Caco-2 (cell line): ENCODE measurements at regions of chr4 and their contacts with region 1.

Region 1: GRCh38 chr4:30950737-30951136 is 230.6 kb downstream of the PCDH7 start:
- DNase-seq: peak; percentile 25 to 71
- H3K4me3 ChIP-seq: no peak overlapping the region
- H3K4me3 Mint-ChIP-seq: no peak overlapping the region
- H3K27ac Mint-ChIP-seq: peak overlapping the region; percentile 33
- H3K4me1 ChIP-seq: peaks cover 58% of the 10 kb centered on the region
- H3K4me1 Mint-ChIP-seq: peaks cover 39% of the 10 kb centered on the region
- H3K27me3 ChIP-seq: no peaks in the 10 kb centered on the region
- H3K27me3 Mint-ChIP-seq: no peaks in the 10 kb centered on the region
- CTCF ChIP-seq: no peak

Region 2: DNA sequence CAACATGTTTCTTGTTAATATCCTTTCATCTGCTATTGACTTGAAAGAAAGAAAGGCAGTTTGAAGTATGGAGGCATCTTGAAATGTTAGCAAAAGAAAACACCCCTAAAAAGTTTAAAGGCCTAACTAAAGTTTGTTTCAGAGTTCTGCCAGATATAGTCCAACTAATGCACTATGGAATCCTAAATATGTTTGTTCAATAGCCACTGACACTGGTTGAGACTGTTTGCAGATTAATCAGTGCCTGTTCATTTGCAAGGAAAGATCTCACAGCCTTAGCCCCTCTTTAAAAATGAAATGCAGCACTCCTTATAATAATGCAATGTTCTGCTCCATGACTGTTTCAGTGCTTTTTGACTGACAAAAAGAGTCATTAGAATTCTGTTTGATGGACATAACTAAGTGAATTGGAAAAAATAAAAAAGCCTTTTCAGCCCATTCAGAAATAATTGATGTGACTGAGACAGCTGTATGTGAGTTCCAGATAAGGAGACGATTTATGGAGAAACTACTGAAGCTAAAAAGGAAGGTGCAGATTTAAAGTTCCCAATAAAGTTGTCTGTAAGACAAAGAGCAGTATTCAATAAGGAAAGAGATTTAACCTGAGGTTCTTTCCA is 38.5 kb before region 1 on chr4:
- CTCF ChIA-PET with region 1: no interaction called
- POLR2A ChIA-PET with region 1: no interaction called
- intact Hi-C with region 1: loop called (anchors 2 kb)
- DNase-seq: peak in 1 of 2 experiments; percentile 5
- H3K4me3 ChIP-seq: no peak overlapping the region
- H3K4me3 Mint-ChIP-seq: peak overlapping the region; percentile 50
- H3K27ac Mint-ChIP-seq: peak overlapping the region; percentile 39
- H3K4me1 ChIP-seq: peaks cover 27% of the 10 kb centered on the region
- H3K4me1 Mint-ChIP-seq: peaks cover 27% of the 10 kb centered on the region
- H3K27me3 ChIP-seq: no peaks in the 10 kb centered on the region
- H3K27me3 Mint-ChIP-seq: no peaks in the 10 kb centered on the region
- CTCF ChIP-seq: no peak